Activated T-helper 1 cell treated with anti-CD3 and anti-CD28 coated beads, Interleukin-12 subunit alpha, Interleukin-12 subunit beta, Interleukin-2, Interleukin-4 antibody, amounts not matched to agents 30 ng/mL and 10 ng/mL and 1 ng/mL, durations not matched to agents 14 hours and 24 hours and 36 hours (primary cell): ENCODE measurements at regions of chr7 and their contacts with region 1.

Region 1: DNA sequence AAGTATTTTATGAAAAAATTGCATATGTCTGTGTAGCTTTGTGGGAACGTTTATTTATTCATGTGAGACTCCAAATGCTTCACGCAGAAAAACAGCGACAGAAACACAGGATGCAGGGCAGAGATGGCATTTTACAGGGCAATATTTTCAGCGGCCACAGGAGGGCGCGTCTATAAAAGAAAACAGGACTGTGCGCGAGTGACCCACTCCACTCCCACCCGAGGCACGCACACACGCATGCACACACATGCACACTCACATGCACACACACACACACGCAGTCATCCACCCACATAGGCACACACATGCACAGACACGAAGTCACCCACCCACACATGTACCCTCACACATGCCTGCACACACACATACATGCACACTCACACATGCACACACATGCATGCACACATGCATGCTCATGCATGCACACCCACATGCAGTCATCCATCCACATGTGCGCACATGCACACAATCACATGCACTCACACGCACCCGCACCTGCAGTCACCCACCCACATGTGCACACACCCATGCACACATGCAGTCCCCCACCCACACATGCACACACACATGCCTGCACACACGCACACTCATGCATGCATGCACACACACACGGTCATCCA is 96.3 kb downstream of the DNAJB6 start:
- DNase-seq: peak; percentile 49
- H3K4me3 Mint-ChIP-seq: peak overlapping the region; percentile 66
- H3K27ac Mint-ChIP-seq: peak overlapping the region; percentile 43
- H3K4me1 Mint-ChIP-seq: peaks cover 13% of the 10 kb centered on the region
- H3K27me3 Mint-ChIP-seq: peaks cover 7% of the 10 kb centered on the region

Region 2: DNA sequence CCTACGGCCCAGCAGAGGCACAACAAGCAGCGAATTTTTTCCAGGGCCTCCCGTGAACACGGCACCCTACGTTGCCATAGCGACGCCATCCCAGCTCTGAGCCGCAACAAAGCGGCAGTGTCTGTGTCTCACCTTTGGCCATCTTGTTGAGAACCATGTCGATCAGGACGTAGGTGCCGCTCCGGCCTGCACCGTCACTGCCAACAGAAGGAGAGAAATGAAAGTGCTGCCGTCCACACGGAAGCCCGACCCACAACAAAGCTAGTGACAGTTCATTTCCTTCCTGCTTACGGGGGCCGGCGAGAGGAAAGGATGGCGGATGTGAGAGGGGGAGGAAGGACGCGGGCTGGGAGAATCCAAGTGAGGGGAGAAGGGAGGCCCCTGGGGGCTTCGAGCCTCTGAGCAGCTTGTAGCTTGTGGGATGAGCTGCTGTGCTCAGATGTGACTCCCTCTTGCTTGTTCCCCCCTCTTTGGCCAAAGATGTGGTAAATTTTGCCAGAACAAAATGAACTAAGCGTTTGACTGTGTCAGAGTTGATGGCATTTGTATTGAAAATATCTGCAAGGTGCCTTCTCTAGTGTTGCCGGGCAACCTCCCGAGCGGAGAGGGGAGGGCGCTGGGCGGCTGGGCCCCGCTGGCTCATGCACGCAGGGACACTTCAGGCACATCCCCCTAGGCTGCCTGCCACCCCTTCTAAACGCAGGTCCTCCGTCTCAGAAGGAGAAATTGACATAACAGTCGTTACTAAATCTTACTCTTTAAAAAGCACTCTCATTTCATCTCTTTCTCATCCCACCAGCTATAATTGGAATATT is 135.9 kb after region 1 on chr7:
- intact Hi-C with region 1: loop called (anchors 5 kb)
- DNase-seq: peak; percentile 40
- H3K4me3 Mint-ChIP-seq: peak overlapping the region; percentile 83
- H3K27ac Mint-ChIP-seq: peak overlapping the region; percentile 74
- H3K4me1 Mint-ChIP-seq: peaks cover 38% of the 10 kb centered on the region
- H3K27me3 Mint-ChIP-seq: peaks cover 4% of the 10 kb centered on the region

Region 3: DNA sequence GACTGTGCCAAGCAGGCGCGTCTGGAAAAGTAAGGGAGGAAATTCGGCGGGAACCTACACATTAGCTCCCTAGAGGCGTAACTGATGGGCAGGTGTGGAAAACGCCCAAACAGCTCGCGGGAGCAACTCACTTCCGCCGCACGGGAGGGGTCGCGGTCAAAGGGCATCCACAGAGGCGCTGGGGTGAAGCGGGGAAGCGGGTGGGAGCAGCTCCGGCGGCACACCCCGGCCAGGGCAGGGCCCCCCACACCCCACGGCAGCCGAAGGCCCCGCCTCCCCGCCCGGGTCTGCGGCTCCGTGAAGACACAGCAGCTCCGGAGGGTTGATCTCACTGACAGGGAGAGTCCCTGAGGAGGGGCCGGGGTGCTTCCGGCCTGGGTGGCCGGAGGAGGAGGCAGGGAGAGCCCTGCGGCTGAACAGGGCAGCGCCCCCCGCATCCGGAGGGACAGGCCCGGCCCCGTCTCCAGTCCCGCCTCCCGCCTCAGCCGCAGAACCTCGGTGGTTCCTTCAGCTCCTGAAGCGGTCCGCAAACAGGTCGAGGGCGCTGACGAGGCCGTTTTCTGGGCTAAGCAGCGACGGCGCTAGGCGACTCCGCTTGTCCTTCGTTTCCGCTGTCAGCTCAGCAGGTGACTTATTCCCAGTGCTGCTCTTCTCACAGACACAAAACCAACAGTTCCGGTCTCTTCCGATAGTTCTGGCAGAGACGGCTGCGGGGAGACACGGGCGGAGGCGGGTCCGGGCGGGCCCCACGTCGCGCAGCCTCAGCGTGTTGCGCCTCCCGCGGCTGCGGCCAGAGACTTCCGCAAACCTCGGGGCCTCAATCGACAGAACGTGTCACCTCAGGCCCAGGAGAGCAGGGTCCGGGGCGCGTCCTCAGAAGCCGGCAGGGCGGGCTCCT is 179.8 kb after region 1 on chr7:
- intact Hi-C with region 1: loop called (anchors 1 kb)
- DNase-seq: peak; percentile 59
- H3K4me3 Mint-ChIP-seq: peak overlapping the region; percentile 82
- H3K27ac Mint-ChIP-seq: no peak overlapping the region
- H3K4me1 Mint-ChIP-seq: peaks cover 7% of the 10 kb centered on the region
- H3K27me3 Mint-ChIP-seq: no peaks in the 10 kb centered on the region